T-cell (primary cell): ENCODE measurements at regions of chr1 and their contacts with region 1.

Region 1: DNA sequence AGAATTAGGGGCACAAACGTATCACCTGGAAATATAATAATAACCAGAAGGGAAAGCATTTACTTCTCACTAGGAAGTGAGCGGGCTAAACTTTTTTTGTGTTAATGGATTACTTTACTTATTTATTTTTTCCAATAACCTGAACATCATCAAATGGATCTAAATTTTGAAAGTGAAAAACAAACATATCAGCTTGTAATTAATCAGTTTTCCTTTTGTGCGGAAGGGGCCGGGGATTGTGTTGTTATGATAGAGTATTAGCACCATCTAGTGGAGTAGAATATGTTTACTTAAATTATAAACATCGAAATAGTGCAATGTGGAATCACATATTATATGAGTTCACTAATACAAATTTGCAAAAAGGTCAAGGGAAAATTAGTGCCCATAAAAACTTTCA is 9.0 kb downstream of the CFH start:
- DNase-seq: peak in 1 of 35 experiments; percentile 50
- ATAC-seq: peak in 1 of 4 experiments; percentile 54
- H3K4me3 ChIP-seq: no peak overlapping the region
- H3K4me3 Mint-ChIP-seq: peak overlapping the region in 1 of 3 donors; percentile 25
- H3K27ac ChIP-seq: no peak overlapping the region
- H3K27ac Mint-ChIP-seq: no peak overlapping the region
- H3K4me1 ChIP-seq: no peaks in the 10 kb centered on the region
- H3K4me1 Mint-ChIP-seq: peaks cover 0 to 17% (median 0%) of the 10 kb centered on the region in 3 donors
- H3K27me3 ChIP-seq: no peaks in the 10 kb centered on the region
- H3K27me3 Mint-ChIP-seq: no peaks in the 10 kb centered on the region

Region 2: GRCh38 chr1:196409586-196409985 is 251.3 kb before region 1 on chr1:
- CTCF ChIA-PET with region 1: no interaction called
- POLR2A ChIA-PET with region 1: interaction called in 1 of 2 experiments, 10 read pairs
- DNase-seq: no peak
- ATAC-seq: no peak
- H3K4me3 ChIP-seq: no peak overlapping the region
- H3K4me3 Mint-ChIP-seq: no peak overlapping the region
- H3K27ac ChIP-seq: no peak overlapping the region
- H3K27ac Mint-ChIP-seq: no peak overlapping the region
- H3K4me1 ChIP-seq: no peaks in the 10 kb centered on the region
- H3K4me1 Mint-ChIP-seq: no peaks in the 10 kb centered on the region
- H3K27me3 ChIP-seq: no peaks in the 10 kb centered on the region
- H3K27me3 Mint-ChIP-seq: no peaks in the 10 kb centered on the region